ENCODE measurements at regions of chr9 and their contacts with region 1.

Region 1: DNA sequence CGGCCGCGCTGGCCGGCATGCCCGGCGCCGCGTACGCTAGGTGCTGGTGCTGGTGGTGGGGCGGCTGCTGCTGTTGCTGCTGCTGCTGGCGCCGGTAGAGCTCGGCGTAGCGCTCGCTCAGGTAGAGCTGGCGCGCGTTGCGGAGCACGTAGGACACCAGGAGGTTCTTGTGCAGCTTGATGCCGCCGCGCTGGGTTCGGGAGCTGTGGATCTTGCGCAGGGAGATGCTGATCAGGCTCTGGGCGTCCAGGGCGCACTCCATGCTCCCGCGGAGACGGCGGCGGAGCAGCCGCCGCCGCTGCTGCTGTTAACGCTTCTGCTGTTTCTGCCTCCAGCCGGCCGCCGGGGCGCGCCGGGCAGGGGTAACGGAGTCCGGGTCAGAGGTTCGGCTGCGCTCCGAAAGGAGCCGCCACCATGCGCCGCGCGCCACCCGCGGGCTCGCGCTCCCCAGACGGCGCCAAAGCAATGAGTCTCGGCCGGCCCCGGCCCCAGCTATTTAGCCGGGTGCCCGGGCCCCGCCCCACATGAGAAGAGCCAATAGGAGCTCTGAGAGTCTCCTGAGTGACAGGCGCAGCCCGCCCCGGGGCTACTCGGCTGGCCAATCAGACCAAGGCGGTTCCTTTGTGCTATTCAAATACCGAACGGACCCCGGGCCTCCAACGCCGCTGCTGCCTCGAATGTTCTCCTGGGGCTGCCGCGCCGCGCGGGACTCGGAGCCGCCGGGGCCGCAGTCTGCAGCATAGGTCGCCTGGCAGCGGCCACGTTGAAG is at the start of gene IER5L:
- DNase-seq: peak; percentile 95
- H3K4me3 Mint-ChIP-seq: peak within 1 kb of the TSS; percentile 89
- H3K27ac Mint-ChIP-seq: peak within 1 kb of the TSS; percentile 51
- H3K4me1 Mint-ChIP-seq: no peaks in the 10 kb centered on the region
- H3K27me3 Mint-ChIP-seq: no peaks in the 10 kb centered on the region
- CTCF ChIP-seq: no peak
- total RNA-seq, gene IER5L: 11.9 and 13.4 TPM in 2 replicates

Region 2: GRCh38 chr9:129139993-129140396 is 38.0 kb before region 1 on chr9:
- CTCF ChIA-PET with region 1: interaction called, 103 read pairs
- POLR2A ChIA-PET with region 1: interaction called, 154 read pairs
- intact Hi-C with region 1: loop called (anchors 1 kb)
- DNase-seq: peak; percentile 99
- H3K4me3 Mint-ChIP-seq: peak overlapping the region; percentile 74
- H3K27ac Mint-ChIP-seq: peak overlapping the region; percentile 97
- H3K4me1 Mint-ChIP-seq: peaks cover 30% of the 10 kb centered on the region
- H3K27me3 Mint-ChIP-seq: no peaks in the 10 kb centered on the region
- CTCF ChIP-seq: no peak

Region 3: DNA sequence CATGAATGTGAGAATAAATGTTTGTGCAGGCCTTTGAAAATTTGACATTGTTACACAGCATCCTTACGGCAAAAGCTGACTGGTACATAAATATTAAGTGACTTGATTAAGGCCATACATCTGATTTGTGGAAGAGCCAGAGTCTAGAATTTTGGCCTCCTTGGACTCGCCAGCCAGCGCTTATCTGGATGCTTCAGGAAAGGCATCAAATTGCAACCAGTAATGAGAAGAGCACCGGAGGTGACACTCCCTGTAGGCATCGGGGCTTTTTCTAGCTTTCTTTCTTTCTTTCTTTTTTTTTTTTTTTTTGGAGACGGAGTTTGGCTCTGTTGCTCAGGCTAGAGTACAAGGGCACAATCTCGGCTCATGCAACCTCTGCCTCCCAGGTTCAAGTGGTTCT is 13.3 kb after region 1 on chr9:
- CTCF ChIA-PET with region 1: interaction called, 3 read pairs
- POLR2A ChIA-PET with region 1: interaction called, 16 read pairs
- intact Hi-C with region 1: no loop called
- DNase-seq: no peak
- H3K4me3 Mint-ChIP-seq: no peak overlapping the region
- H3K27ac Mint-ChIP-seq: no peak overlapping the region
- H3K4me1 Mint-ChIP-seq: no peaks in the 10 kb centered on the region
- H3K27me3 Mint-ChIP-seq: peaks cover 13% of the 10 kb centered on the region
- CTCF ChIP-seq: no peak

Region 4: DNA sequence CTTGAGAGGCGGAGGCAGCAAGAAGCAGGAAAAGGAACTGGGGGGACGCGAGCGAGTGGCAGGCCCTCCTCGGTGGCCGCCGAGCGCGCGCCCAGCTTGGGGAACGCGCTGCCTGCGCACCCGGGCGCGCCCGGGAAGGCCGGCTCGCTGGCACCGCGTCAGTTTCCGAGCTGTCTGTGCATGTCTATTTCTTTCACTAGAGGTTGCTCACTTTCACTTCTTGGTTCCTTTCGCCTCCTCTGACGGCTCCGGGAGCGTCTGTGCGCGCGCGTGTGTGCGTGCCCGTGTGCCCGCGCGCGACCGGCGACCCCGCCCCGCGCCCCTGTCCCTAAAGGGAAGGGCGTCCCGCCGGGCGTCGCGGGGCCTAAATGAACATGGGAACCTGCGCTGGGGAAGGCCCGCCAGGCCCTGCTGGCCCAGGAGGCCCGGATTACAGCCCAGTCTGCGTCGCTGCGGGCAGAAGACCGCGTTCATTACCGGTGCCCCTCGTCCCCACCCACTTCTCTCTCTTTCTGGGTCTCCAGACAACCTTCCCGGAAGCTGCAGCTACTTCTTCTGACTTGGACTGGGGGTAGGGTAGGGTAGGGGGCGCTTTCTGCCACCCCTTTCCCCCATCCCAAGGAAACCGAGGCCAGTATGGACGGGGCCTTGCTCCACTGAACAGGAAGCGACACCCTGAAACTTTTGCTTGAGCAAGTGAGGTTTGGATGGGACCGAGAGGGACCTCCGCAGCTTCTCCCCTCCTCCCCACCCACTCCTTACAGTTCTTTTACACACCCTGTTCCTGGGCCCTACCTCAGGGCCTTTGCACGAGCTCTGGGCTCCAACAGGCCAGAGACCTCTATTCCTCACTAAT is 205.8 kb after region 1 on chr9:
- CTCF ChIA-PET with region 1: interaction called, 3 read pairs
- POLR2A ChIA-PET with region 1: interaction called, 4 read pairs
- intact Hi-C with region 1: loop called (anchors 2 kb)
- DNase-seq: peak; percentile 52
- H3K4me3 Mint-ChIP-seq: peak overlapping the region; percentile 53
- H3K27ac Mint-ChIP-seq: no peak overlapping the region
- H3K4me1 Mint-ChIP-seq: peaks cover 6% of the 10 kb centered on the region
- H3K27me3 Mint-ChIP-seq: no peaks in the 10 kb centered on the region
- CTCF ChIP-seq: no peak

Region 5: DNA sequence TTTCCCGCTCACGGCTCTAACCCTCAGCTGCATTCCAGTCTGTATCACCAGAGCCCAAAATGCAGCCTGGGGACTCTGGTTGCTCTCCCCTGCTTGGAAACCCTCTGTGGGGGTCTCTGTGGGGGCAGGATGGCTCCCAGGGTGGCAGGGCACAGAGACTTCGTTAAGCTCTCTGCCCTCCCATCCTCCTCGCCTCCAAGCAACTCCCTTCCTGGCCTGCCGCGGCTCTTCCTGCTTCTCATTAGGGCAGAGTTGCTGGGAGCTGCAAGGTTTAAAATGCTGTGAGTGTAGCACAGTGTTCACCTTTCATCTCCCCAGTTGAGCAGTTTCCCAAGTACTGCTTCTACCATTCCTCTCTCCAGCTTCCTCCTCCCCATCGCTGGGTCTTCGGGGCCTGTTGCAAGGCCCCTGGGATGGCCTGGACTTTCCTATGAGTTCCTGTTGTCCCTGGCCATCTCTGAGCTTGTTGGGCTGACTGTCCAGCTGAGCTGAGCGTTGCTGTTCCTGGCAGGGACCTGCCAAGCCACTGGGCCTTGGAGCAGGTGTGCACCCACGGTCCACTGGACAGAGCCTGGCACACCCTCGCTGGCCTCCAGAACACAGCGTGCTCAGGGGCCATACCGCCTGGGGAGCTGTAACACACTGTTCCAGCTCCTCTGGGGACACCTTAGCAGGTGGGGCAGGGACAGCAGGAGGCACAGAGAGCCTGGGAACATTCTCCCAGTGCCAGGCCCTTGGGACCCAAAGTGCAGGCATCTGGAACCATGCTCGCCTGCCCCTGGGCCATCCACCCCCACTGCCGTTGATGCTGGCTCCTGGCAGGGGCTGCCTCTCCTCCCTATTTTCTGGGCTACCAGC is 254.6 kb after region 1 on chr9:
- CTCF ChIA-PET with region 1: no interaction called
- POLR2A ChIA-PET with region 1: no interaction called
- intact Hi-C with region 1: no loop called
- DNase-seq: no peak
- H3K4me3 Mint-ChIP-seq: no peak overlapping the region
- H3K27ac Mint-ChIP-seq: no peak overlapping the region
- H3K4me1 Mint-ChIP-seq: no peaks in the 10 kb centered on the region
- H3K27me3 Mint-ChIP-seq: peaks cover 23% of the 10 kb centered on the region
- CTCF ChIP-seq: no peak

Region 6: GRCh38 chr9:129487642-129488409 is 309.9 kb after region 1 on chr9:
- CTCF ChIA-PET with region 1: interaction called, 4 read pairs
- POLR2A ChIA-PET with region 1: interaction called, 75 read pairs
- intact Hi-C with region 1: no loop called
- DNase-seq: peak; percentile 70
- H3K4me3 Mint-ChIP-seq: peak overlapping the region; percentile 69
- H3K27ac Mint-ChIP-seq: peak overlapping the region; percentile 93
- H3K4me1 Mint-ChIP-seq: peaks cover 59% of the 10 kb centered on the region
- H3K27me3 Mint-ChIP-seq: no peaks in the 10 kb centered on the region
- CTCF ChIP-seq: no peak

Region 7: DNA sequence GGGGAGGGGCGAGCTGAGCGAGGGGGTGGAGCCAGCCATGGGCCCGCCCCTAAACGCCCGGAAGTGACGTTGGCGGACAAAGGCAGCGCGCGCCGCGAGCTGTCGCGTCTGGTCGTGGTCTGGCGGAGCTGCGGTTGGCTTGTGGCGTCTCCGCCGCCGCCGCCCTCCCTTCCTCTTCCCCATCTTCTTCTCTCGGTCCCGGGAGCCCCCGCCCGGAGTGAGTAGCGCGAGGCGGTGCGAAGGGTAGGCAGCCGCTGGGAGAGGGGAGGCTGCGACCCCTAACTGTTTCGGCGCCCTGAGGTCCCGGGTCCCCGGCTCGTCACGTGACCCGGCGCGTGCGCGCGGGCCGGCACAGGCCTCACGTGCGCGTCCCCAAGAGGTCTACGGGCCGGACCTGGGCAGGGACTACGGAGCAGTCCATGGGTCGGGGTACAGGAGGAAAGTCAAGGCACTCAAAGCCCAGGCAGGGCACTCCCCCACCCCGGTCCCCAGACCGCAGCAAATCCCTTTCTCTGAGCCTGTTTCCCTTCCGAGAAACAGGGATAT is 448.2 kb after region 1 on chr9 and contains the start of gene NTMT1:
- CTCF ChIA-PET with region 1: interaction called, 7 read pairs
- POLR2A ChIA-PET with region 1: interaction called, 39 read pairs
- intact Hi-C with region 1: no loop called
- DNase-seq: peak; percentile 82
- H3K4me3 Mint-ChIP-seq: peak within 1 kb of the TSS; percentile 92
- H3K27ac Mint-ChIP-seq: peak within 1 kb of the TSS; percentile 72
- H3K4me1 Mint-ChIP-seq: peaks cover 33% of the 10 kb centered on the region
- H3K27me3 Mint-ChIP-seq: no peaks in the 10 kb centered on the region
- CTCF ChIP-seq: no peak
- total RNA-seq, gene NTMT1: 32.9 and 49.2 TPM in 2 replicates